ENCODE measurements at regions of chr2 and their contacts with region 1.

Region 1: DNA sequence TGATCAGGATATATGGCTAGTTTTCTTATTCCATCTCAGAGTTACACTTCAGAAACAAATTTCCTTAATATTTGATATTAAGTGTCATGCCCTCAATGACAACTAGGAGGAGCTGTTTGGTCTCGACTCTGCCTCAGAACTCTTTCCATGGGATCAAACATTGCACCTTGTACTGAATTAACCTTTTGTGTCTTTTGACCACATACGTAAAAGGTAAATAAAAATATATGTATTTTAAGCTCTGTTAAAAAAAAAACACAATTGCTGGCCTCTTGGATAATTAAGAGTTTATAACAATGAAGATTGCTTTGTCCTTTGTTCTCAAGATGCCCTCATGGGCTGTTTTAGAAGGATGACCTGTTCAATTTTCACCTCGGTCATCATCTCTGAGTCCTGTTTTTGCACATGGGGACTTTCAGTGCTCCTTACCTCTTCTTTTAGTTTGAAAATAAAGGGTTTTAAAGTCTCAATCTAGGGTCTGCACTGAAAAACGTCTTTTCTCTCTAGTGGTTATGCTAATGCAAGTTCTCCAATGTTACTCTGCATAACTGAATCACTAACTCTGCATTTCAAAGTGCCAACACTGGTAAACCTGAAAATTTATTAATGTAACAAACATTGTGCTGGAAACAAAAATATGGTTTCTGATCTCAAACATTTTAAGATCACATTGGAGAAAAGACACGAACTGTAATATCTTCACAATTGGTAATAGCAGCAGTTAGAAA is 18.8 kb upstream of the FN1 start:
- DNase-seq: no peak
- H3K4me3 Mint-ChIP-seq: no peak overlapping the region
- H3K27ac Mint-ChIP-seq: no peak overlapping the region
- H3K4me1 Mint-ChIP-seq: no peaks in the 10 kb centered on the region
- H3K27me3 Mint-ChIP-seq: peaks cover 13% of the 10 kb centered on the region

Region 2: DNA sequence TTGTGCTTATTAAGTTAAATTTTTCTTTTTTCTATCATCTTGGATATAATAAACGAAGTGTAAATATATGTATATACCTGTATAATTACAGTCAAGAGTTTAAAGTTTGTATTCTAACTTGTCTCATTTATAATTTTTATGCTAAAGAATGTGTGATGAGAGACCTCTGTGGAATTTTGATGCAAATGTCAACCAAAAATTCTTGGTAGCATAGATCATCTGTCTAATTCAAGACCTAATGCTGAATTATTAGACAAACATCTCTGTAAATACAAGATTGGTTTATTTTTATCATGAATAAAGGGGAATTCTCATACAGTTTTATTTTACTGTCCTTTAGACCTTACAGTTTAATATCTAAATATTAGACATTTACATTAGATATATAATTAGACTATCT is 1193.0 kb before region 1 on chr2:
- CTCF ChIA-PET with region 1: no interaction called
- POLR2A ChIA-PET with region 1: no interaction called
- intact Hi-C with region 1: no loop called
- DNase-seq: no peak
- H3K4me3 Mint-ChIP-seq: no peak overlapping the region
- H3K27ac Mint-ChIP-seq: no peak overlapping the region
- H3K4me1 Mint-ChIP-seq: no peaks in the 10 kb centered on the region
- H3K27me3 Mint-ChIP-seq: no peaks in the 10 kb centered on the region

Region 3: GRCh38 chr2:215034158-215034557 is 420.5 kb before region 1 on chr2:
- CTCF ChIA-PET with region 1: no interaction called
- POLR2A ChIA-PET with region 1: no interaction called
- intact Hi-C with region 1: no loop called
- DNase-seq: no peak
- H3K4me3 Mint-ChIP-seq: no peak overlapping the region
- H3K27ac Mint-ChIP-seq: no peak overlapping the region
- H3K4me1 Mint-ChIP-seq: no peaks in the 10 kb centered on the region
- H3K27me3 Mint-ChIP-seq: no peaks in the 10 kb centered on the region

Region 4: DNA sequence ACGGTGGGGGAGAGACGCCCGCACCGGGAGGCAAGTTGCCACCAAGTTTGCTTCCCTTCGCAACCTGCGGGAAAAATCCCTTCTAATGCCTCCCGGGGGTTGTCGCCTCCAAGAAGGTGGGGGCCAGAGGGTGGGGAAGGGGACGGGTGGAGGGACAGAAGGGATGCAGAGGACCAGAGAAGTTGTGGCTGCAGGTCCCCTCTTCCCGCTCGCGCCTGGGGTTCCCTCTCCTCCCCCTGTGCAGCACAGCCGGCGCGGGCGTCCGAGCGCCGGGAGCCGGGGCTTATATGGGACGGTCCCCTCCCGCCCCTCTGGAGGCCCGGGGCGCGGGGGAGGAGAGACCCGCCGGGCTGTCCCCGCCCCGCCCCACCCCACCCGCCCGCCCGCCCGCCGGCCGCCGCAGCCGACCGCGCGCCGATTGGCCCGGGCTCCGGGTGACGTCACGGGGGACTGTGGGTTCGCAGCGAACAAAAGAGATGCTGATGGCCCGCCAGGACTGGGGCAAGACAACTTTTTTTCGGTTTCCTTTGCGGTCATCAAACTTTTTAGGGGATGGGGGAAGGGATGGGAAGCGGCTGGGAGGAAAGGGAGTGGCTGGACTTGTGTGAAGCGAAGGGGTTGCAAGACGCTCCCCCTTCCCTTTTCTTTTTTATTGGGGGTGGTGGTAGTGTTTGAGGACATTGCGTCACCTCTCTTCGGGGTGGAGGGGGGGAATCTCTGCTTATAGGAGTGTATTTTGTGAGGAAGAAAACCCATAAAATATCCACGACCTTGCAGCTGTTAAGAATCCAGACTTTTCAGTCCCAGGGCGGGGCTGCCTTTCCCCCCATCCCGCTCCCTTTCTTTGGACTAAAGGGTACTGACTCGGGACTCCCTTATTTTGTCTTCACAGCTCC is 18.6 kb before region 1 on chr2 and contains the start of gene FN1:
- CTCF ChIA-PET with region 1: no interaction called
- POLR2A ChIA-PET with region 1: no interaction called
- intact Hi-C with region 1: no loop called
- DNase-seq: peak; percentile 69
- H3K4me3 Mint-ChIP-seq: peak within 1 kb of the TSS; percentile 72
- H3K27ac Mint-ChIP-seq: no peak within 1 kb of the TSS
- H3K4me1 Mint-ChIP-seq: peaks cover 15% of the 10 kb centered on the region
- H3K27me3 Mint-ChIP-seq: peaks cover 55% of the 10 kb centered on the region
- total RNA-seq, gene FN1: 0.50 to 0.53 TPM

Region 5: DNA sequence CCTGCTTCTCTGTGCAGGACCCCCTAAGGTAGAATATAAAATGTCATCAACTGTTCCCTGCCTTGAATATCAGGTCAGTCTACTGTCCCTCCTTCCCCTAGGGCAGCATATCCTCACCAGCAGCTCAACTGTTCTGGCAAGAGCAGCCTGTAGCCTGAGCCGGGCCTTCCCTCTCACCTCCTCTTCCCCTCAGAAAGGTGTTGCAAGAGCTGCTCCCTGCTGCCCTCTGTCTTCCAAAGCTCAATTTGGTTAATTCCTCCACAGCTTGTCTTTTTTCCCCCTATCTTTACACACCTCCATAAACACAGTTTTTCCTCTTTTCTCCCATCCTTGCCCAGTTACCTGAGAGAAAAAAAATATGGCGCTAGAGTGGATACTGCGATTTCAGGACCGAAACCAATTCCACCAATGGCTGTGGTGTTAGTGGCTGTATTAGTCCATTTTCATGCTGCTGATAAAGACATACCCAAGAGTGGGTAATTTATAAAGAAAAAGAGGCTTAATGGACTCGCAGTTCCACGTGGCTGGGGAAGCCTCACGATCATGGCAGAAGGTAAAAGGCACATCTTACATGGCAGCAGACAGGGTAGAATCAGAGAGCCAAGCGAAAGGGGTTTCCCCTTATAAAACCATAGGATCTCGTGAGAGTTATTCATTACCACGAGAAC is 374.0 kb after region 1 on chr2:
- CTCF ChIA-PET with region 1: no interaction called
- POLR2A ChIA-PET with region 1: no interaction called
- intact Hi-C with region 1: loop called (anchors 1 kb)
- DNase-seq: peak; percentile 57
- H3K4me3 Mint-ChIP-seq: no peak overlapping the region
- H3K27ac Mint-ChIP-seq: no peak overlapping the region
- H3K4me1 Mint-ChIP-seq: peaks cover 5% of the 10 kb centered on the region
- H3K27me3 Mint-ChIP-seq: no peaks in the 10 kb centered on the region

Region 6: GRCh38 chr2:215920244-215921100 is 465.8 kb after region 1 on chr2:
- CTCF ChIA-PET with region 1: interaction called, 6 read pairs
- POLR2A ChIA-PET with region 1: no interaction called
- intact Hi-C with region 1: loop called (anchors 1 kb)
- DNase-seq: peak; percentile 69
- H3K4me3 Mint-ChIP-seq: no peak overlapping the region
- H3K27ac Mint-ChIP-seq: no peak overlapping the region
- H3K4me1 Mint-ChIP-seq: no peaks in the 10 kb centered on the region
- H3K27me3 Mint-ChIP-seq: peaks cover under 1% of the 10 kb centered on the region

Region 7: DNA sequence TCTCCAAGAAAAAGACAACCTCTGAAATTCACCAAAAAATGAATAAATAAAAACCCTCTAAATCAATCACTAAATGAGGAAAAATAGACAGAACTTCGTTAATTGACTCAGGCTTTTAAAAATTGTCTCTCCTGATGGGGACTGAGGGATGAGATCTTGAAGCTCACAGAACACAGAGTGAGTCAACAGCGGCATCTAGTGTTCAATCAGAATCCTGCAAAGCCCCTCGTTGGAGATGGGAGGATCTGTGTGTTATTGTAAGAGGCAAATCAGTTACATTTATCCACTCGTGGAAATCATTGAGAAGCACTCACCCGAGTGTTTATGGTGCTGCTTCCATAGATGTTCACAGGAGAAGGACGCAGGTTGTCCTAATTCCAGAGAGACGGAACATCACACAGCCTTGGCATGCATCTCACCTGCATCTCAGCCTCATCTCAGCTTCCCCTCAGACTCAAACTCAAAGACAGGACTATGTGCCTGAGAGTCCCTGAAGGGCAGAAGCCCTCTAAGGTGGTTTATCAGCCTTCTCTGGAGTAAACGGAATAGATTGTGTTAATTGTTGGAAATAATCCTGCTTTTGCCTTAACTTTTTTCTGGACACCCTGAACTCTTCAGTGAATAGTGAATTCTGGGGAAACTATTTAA is 476.7 kb after region 1 on chr2:
- CTCF ChIA-PET with region 1: interaction called, 26 read pairs
- POLR2A ChIA-PET with region 1: no interaction called
- intact Hi-C with region 1: no loop called
- DNase-seq: peak; percentile 68
- H3K4me3 Mint-ChIP-seq: no peak overlapping the region
- H3K27ac Mint-ChIP-seq: no peak overlapping the region
- H3K4me1 Mint-ChIP-seq: peaks cover 2% of the 10 kb centered on the region
- H3K27me3 Mint-ChIP-seq: peaks cover 4% of the 10 kb centered on the region

Measured in activated CD4-positive, alpha-beta memory T cell treated with anti-CD3 and anti-CD28 coated beads for 36 hours (primary cell).